GM10248 (cell line): ENCODE measurements at regions of chr4 and their contacts with region 1.

Region 1: GRCh38 chr4:83378419-83378818 is 43.8 kb upstream of the HPSE start:
- DNase-seq: no peak
- CTCF ChIP-seq: no peak

Region 2: DNA sequence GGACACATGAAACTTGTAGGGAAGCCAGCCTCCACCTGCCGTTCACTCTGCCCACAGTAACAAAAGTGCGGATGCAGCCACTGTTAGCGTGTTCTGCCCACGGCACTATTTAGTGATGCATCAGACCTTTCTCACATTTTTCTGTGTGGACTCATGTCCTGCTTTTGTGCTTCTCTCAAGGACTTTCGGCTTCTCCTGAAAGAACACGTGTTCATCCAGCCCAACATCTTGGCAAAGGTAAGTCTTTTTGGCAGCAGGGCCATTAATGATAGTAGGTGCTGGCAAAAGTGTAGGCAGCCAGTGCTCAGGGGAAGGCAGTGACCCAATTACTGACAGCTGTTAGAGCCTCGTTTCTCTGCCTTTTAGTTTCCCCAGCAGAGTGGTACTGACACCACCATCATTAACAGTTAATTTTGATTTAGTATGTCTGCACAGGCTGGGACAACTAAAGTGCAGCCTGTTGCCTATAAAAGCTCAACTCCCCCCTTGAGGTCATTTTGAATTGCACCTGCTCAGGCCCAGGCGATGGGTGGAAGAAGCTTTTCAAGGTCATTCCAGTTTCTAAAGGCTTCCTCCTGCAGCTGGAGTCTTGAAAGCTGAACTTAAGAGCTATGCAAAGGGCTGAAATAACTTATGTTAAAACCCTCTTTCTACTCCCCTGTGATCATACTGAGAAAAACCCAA is 10.8 kb after region 1 on chr4:
- CTCF ChIA-PET with region 1: interaction called, 12 read pairs
- POLR2A ChIA-PET with region 1: no interaction called
- DNase-seq: no peak
- CTCF ChIP-seq: no peak